ENCODE measurements at regions of chr10 and their contacts with region 1.

Region 1: DNA sequence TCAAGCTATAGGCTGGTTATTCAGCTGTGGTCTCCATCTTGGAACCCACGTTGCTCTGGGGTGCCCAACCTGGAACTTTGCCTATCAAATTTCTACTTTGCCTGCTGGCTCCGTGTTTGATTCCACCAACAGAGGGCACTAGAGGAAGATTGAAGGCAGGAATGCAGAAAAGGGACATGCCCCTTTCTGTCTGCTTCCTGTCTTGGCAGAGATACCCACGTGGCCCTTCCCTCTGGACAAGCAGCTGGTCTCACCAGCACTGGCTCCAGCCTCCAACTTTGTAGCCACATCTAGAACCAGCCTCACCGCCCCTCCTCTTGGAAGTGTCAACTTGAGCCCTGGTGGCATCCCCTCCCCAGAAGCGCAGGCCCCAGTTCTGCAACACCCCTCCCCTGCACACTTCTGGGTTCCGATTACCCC is 52.1 kb upstream of the ZNF438 start:
- DNase-seq: peak; percentile 80
- ATAC-seq: peak; percentile 94
- H3K4me3 Mint-ChIP-seq: no peak overlapping the region
- H3K27ac Mint-ChIP-seq: no peak overlapping the region
- H3K4me1 Mint-ChIP-seq: peaks cover 6% of the 10 kb centered on the region
- H3K27me3 Mint-ChIP-seq: no peaks in the 10 kb centered on the region

Region 2: DNA sequence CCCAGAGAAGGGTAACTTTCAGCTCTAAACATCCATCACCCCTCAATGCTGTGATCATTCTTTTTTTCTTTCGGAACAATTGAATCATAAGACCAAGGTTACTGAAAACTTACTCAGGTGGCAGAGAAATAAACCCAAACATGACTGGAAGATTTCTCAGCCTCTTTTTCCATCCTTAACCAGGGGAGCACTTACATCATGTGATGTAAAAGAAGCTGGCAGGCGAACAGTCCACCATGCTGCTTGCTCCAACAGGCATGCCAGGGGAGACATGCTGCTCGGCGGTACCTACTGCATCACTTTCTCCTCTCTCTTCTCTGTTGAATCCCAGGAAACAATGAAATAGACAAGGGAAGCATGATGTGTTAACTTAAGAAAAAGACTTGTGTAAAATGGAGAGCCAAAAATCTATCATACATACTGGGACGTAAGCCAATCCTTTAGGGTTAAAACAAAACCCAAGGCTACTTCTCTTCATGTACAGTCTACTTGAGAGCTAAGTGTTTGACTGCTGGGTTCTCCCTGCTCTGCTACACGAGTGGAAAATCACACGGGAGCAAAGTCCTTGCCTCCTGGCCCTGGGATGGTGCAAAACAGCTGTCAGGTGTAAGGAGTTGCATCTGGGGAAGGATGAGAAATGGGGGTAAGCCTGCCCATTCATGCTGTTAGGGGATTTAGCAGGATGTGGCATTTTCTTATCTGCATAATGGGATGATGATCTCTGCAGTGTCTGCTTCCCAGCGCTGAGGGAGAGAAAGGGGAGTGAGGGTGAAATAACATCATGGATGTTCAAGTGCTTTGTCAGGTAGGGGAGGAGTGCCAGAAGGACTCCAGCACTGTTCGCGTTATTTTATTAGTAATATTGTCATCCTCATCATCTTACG is 12.1 kb after region 1 on chr10:
- CTCF ChIA-PET with region 1: interaction called, 27 read pairs
- POLR2A ChIA-PET with region 1: interaction called, 8 read pairs
- intact Hi-C with region 1: no loop called
- DNase-seq: peak; percentile 24
- ATAC-seq: peak; percentile 57
- H3K4me3 Mint-ChIP-seq: no peak overlapping the region
- H3K27ac Mint-ChIP-seq: peak overlapping the region; percentile 79
- H3K4me1 Mint-ChIP-seq: peaks cover 28% of the 10 kb centered on the region
- H3K27me3 Mint-ChIP-seq: no peaks in the 10 kb centered on the region

Region 3: GRCh38 chr10:31139497-31139896 is 55.7 kb after region 1 on chr10:
- CTCF ChIA-PET with region 1: no interaction called
- POLR2A ChIA-PET with region 1: no interaction called
- intact Hi-C with region 1: no loop called
- DNase-seq: no peak
- ATAC-seq: no peak
- H3K4me3 Mint-ChIP-seq: no peak overlapping the region
- H3K27ac Mint-ChIP-seq: no peak overlapping the region
- H3K4me1 Mint-ChIP-seq: peaks cover 32% of the 10 kb centered on the region
- H3K27me3 Mint-ChIP-seq: no peaks in the 10 kb centered on the region

Region 4: GRCh38 chr10:31171402-31172083 is 87.8 kb after region 1 on chr10:
- CTCF ChIA-PET with region 1: no interaction called
- POLR2A ChIA-PET with region 1: no interaction called
- intact Hi-C with region 1: loop called in 1 of 2 experiments (anchors 5 kb)
- DNase-seq: no peak
- ATAC-seq: no peak
- H3K4me3 Mint-ChIP-seq: no peak overlapping the region
- H3K27ac Mint-ChIP-seq: no peak overlapping the region
- H3K4me1 Mint-ChIP-seq: peaks cover 10% of the 10 kb centered on the region
- H3K27me3 Mint-ChIP-seq: peaks cover 4% of the 10 kb centered on the region

Region 5: DNA sequence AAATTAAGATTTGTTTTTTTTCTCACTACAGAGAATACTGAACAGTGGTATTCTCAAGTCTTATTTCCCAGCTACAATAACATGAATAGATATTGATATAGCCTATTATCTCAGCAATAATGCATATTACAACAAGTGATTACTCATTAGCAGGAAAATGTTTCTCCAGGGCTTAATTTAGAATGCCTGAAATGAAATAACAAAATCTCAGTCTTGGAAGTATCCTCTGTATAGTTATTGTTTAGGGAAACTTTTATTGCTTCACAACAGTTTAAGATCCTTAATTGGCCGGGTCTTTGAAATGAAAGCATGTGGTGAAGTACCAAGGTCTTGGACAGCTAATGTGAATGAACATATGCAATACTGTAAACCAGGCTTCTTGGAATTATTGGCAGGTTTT is 156.2 kb after region 1 on chr10:
- CTCF ChIA-PET with region 1: interaction called, 3 read pairs
- POLR2A ChIA-PET with region 1: no interaction called
- intact Hi-C with region 1: loop called in 1 of 2 experiments (anchors 5 kb)
- DNase-seq: no peak
- ATAC-seq: no peak
- H3K4me3 Mint-ChIP-seq: no peak overlapping the region
- H3K27ac Mint-ChIP-seq: no peak overlapping the region
- H3K4me1 Mint-ChIP-seq: peaks cover 16% of the 10 kb centered on the region
- H3K27me3 Mint-ChIP-seq: no peaks in the 10 kb centered on the region

Region 6: DNA sequence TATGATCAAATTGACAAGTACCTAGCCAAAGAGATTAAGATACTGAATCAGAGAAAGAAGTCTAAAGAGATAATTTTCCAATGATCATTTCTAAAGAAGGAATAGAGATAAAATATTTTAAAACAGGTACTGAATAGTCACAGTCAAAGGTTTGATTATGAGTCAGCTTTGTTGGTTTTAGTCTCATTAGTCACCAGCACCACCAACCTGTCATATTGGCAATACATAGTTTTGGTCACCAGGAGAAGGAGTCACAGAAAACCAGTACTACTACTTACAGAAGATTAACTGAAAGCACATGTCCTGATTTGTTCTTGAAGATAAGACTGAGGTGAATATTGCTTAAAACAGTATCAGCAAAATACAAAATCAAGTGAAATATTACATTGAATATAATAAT is 269.8 kb after region 1 on chr10:
- CTCF ChIA-PET with region 1: no interaction called
- POLR2A ChIA-PET with region 1: no interaction called
- intact Hi-C with region 1: loop called in 1 of 2 experiments (anchors 5 kb)
- DNase-seq: peak; percentile 27
- ATAC-seq: peak; percentile 99
- H3K4me3 Mint-ChIP-seq: no peak overlapping the region
- H3K27ac Mint-ChIP-seq: no peak overlapping the region
- H3K4me1 Mint-ChIP-seq: peaks cover 59% of the 10 kb centered on the region
- H3K27me3 Mint-ChIP-seq: no peaks in the 10 kb centered on the region

Region 7: GRCh38 chr10:31490858-31491504 is 407.2 kb after region 1 on chr10:
- CTCF ChIA-PET with region 1: interaction called, 8 read pairs
- POLR2A ChIA-PET with region 1: no interaction called
- intact Hi-C with region 1: loop called (anchors 1 to 10 kb)
- DNase-seq: peak; percentile 32
- ATAC-seq: peak; percentile 51
- H3K4me3 Mint-ChIP-seq: no peak overlapping the region
- H3K27ac Mint-ChIP-seq: no peak overlapping the region
- H3K4me1 Mint-ChIP-seq: peaks cover 2% of the 10 kb centered on the region
- H3K27me3 Mint-ChIP-seq: no peaks in the 10 kb centered on the region

Region 8: GRCh38 chr10:31808258-31809218 is 724.8 kb after region 1 on chr10:
- CTCF ChIA-PET with region 1: interaction called, 8 read pairs
- POLR2A ChIA-PET with region 1: no interaction called
- intact Hi-C with region 1: loop called (anchors 1 to 2 kb)
- DNase-seq: peak; percentile 28
- ATAC-seq: peak; percentile 51
- H3K4me3 Mint-ChIP-seq: peak overlapping the region; percentile 22
- H3K27ac Mint-ChIP-seq: peak overlapping the region; percentile 91
- H3K4me1 Mint-ChIP-seq: peaks cover 7% of the 10 kb centered on the region
- H3K27me3 Mint-ChIP-seq: no peaks in the 10 kb centered on the region